MCF 10A (cell line): ENCODE measurements at regions of chr2 and their contacts with region 1.

Region 1: GRCh38 chr2:198296665-198297308 is 492.4 kb downstream of the PLCL1 start:
- DNase-seq: peak; percentile 71
- H3K4me3 Mint-ChIP-seq: no peak overlapping the region
- H3K27ac Mint-ChIP-seq: no peak overlapping the region
- H3K4me1 Mint-ChIP-seq: no peaks in the 10 kb centered on the region
- H3K27me3 Mint-ChIP-seq: peaks cover 32% of the 10 kb centered on the region
- CTCF ChIP-seq: peak; percentile 77

Region 2: GRCh38 chr2:197261808-197262226 is 1035.0 kb before region 1 on chr2:
- CTCF ChIA-PET with region 1: no interaction called
- POLR2A ChIA-PET with region 1: no interaction called
- intact Hi-C with region 1: no loop called
- DNase-seq: no peak
- H3K4me3 Mint-ChIP-seq: no peak overlapping the region
- H3K27ac Mint-ChIP-seq: no peak overlapping the region
- H3K4me1 Mint-ChIP-seq: no peaks in the 10 kb centered on the region
- H3K27me3 Mint-ChIP-seq: no peaks in the 10 kb centered on the region
- CTCF ChIP-seq: no peak

Region 3: GRCh38 chr2:197799068-197799467 is 497.7 kb before region 1 on chr2:
- CTCF ChIA-PET with region 1: interaction called, 24 read pairs
- POLR2A ChIA-PET with region 1: no interaction called
- intact Hi-C with region 1: loop called (anchors 1 kb)
- DNase-seq: no peak
- H3K4me3 Mint-ChIP-seq: no peak overlapping the region
- H3K27ac Mint-ChIP-seq: no peak overlapping the region
- H3K4me1 Mint-ChIP-seq: peaks cover 3% of the 10 kb centered on the region
- H3K27me3 Mint-ChIP-seq: no peaks in the 10 kb centered on the region
- CTCF ChIP-seq: no peak

Region 4: DNA sequence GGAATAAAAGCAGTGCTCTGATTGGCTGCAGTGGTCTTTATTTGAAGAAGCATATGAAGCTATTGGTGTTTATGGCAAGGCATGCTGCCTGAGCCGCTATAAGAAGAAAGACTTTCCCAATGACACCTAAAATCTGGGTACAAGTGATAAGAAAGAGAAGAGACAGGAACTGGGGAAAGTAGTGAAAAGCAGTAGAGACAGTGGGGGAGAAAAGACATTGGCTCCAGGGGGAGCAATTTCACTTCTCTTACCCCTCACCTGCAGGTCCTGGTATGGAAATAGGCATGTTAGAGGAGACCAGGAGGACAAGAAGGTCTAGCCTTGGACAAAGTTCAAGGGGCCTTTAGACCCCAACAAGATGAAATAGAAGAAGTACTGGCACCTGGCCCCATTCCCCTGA is 445.3 kb before region 1 on chr2:
- CTCF ChIA-PET with region 1: no interaction called
- POLR2A ChIA-PET with region 1: no interaction called
- intact Hi-C with region 1: loop called (anchors 2 kb)
- DNase-seq: peak; percentile 40
- H3K4me3 Mint-ChIP-seq: no peak overlapping the region
- H3K27ac Mint-ChIP-seq: no peak overlapping the region
- H3K4me1 Mint-ChIP-seq: peaks cover 14% of the 10 kb centered on the region
- H3K27me3 Mint-ChIP-seq: no peaks in the 10 kb centered on the region
- CTCF ChIP-seq: peak; percentile 11

Region 5: GRCh38 chr2:198127627-198128026 is 169.2 kb before region 1 on chr2:
- CTCF ChIA-PET with region 1: interaction called, 34 read pairs
- POLR2A ChIA-PET with region 1: no interaction called
- intact Hi-C with region 1: loop called (anchors 1 kb)
- DNase-seq: peak; percentile 76
- H3K4me3 Mint-ChIP-seq: no peak overlapping the region
- H3K27ac Mint-ChIP-seq: no peak overlapping the region
- H3K4me1 Mint-ChIP-seq: no peaks in the 10 kb centered on the region
- H3K27me3 Mint-ChIP-seq: peaks cover 35% of the 10 kb centered on the region
- CTCF ChIP-seq: peak; percentile 62

Region 6: DNA sequence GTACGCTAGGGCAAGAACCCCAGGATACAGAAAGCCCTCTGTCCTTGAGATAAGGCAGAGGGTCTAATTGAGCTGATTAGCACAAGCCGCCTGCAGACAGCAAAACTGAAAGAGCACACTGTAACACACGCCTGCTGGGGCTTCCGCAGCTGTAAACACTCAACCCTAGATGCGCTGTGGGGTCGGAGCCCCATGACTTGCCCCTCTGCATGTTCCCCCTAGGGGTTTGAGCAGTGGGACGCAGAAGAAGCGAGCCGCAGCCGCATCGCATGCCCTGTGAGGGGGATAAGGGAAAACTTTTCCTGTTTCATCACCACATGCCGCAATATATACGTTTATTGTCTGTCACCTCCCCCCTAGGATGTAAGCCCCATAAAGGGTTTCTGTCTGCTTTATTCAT is 107.8 kb before region 1 on chr2:
- CTCF ChIA-PET with region 1: no interaction called
- POLR2A ChIA-PET with region 1: no interaction called
- intact Hi-C with region 1: no loop called
- DNase-seq: no peak
- H3K4me3 Mint-ChIP-seq: no peak overlapping the region
- H3K27ac Mint-ChIP-seq: no peak overlapping the region
- H3K4me1 Mint-ChIP-seq: no peaks in the 10 kb centered on the region
- H3K27me3 Mint-ChIP-seq: no peaks in the 10 kb centered on the region
- CTCF ChIP-seq: no peak

Region 7: GRCh38 chr2:198279026-198279425 is 17.8 kb before region 1 on chr2:
- CTCF ChIA-PET with region 1: interaction called, 12 read pairs
- POLR2A ChIA-PET with region 1: no interaction called
- intact Hi-C with region 1: no loop called
- DNase-seq: no peak
- H3K4me3 Mint-ChIP-seq: no peak overlapping the region
- H3K27ac Mint-ChIP-seq: no peak overlapping the region
- H3K4me1 Mint-ChIP-seq: peaks cover 6% of the 10 kb centered on the region
- H3K27me3 Mint-ChIP-seq: peaks cover 50% of the 10 kb centered on the region
- CTCF ChIP-seq: no peak

Region 8: DNA sequence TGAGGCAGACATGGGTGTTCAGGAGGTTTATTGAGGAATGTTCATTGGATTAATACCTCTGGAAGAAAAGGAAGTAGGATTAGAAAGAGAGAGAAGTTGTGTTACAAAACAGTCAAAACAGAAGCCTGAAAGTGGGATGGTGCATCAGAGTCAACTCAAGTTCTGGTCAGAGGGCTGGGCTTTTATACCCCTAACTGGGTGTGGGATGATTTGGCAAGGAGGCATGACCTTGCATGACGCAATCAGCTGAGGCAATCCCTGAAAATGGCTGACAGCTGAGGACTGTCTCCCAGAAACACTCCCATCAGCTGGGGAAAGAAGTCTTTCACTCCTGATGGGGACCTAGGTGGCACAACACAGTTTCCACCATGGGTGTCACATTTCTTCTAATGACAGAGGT is 342.8 kb after region 1 on chr2:
- CTCF ChIA-PET with region 1: no interaction called
- POLR2A ChIA-PET with region 1: no interaction called
- intact Hi-C with region 1: no loop called
- DNase-seq: no peak
- H3K4me3 Mint-ChIP-seq: no peak overlapping the region
- H3K27ac Mint-ChIP-seq: no peak overlapping the region
- H3K4me1 Mint-ChIP-seq: no peaks in the 10 kb centered on the region
- H3K27me3 Mint-ChIP-seq: peaks cover 40% of the 10 kb centered on the region
- CTCF ChIP-seq: no peak